Gastrocnemius medialis (tissue), 4 donors: ENCODE measurements at regions of chr12 and their contacts with region 1.

Region 1: GRCh38 chr12:70353780-70354660 is 12.1 kb upstream of the KCNMB4 start:
- DNase-seq: no peak
- ATAC-seq: no peak
- H3K4me3 ChIP-seq: no peak overlapping the region
- H3K27ac ChIP-seq: no peak overlapping the region
- H3K4me1 ChIP-seq: no peaks in the 10 kb centered on the region
- H3K27me3 ChIP-seq: no peaks in the 10 kb centered on the region
- CTCF ChIP-seq: no peak
- POLR2A ChIP-seq: no peak

Region 2: DNA sequence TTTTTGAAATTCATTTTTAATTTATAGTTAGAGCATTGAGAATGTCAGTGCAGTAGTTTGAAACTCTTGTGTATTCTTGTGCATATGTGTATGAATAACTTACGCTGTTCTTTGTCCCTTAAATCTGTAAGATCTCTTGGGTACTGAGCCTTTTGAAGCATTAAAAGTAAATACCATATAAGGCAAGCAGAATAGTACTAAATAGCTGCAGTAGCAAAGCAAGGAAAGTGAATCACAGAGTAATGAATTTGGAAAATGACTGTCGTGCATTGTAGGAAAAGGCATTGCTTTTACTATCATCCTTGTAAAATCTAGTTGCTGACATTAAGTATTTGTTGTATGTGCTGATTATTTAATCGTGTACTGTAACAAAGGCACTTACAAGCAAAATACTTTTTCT is 98.7 kb before region 1 on chr12:
- in situ Hi-C with region 1: loop called in 1 of 4 experiments (anchors 10 kb)
- intact Hi-C with region 1: no loop called
- DNase-seq: no peak
- ATAC-seq: no peak
- H3K4me3 ChIP-seq: no peak overlapping the region
- H3K27ac ChIP-seq: no peak overlapping the region
- H3K4me1 ChIP-seq: peaks cover 60 to 61% of the 10 kb centered on the region in 2 donors
- H3K27me3 ChIP-seq: no peaks in the 10 kb centered on the region
- CTCF ChIP-seq: no peak
- POLR2A ChIP-seq: no peak

Region 3: DNA sequence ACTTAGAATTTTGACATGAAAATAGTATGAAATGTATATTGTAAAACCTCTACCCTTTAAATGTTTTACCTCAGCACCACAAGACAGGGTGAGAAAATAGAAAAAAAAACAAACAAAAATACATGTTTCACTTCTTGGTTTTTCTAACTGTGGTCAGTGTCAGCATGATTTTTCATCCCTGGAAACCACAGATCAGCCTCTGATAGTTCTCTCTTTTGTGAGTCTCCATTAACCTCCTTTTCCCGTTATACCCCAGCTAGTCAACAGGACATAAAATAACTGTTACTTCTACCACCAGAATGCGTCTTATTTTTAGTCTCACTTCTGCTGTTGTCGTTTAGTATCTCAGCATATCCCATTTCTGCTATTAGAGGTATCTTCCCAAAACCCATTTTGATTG is 36.2 kb before region 1 on chr12:
- in situ Hi-C with region 1: no loop called
- intact Hi-C with region 1: loop called (anchors 5 kb)
- DNase-seq: no peak
- ATAC-seq: no peak
- H3K4me3 ChIP-seq: no peak overlapping the region
- H3K27ac ChIP-seq: no peak overlapping the region
- H3K4me1 ChIP-seq: peaks cover 0 to 9% of the 10 kb centered on the region in 2 donors
- H3K27me3 ChIP-seq: no peaks in the 10 kb centered on the region
- CTCF ChIP-seq: no peak
- POLR2A ChIP-seq: no peak

Region 4: DNA sequence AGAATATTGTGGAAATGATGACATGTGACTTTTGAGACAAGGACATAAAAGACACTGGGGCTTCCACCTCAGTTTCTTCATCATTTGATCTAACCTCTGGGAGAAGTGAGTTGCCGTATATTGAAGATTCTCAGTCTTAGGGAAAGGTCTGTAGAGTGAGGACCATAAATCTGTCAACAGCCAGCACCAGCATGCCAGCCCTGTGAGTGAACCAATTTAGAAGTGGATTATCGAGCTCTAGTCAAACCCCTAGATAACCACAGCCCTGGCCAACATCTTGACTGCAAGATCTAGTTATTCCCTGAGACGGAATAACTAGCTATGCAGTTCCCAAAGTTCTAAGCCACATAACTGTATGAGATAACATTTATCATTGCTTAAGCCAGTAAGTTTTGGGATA is 675.3 kb after region 1 on chr12:
- in situ Hi-C with region 1: no loop called
- intact Hi-C with region 1: no loop called
- DNase-seq: no peak
- ATAC-seq: no peak
- H3K4me3 ChIP-seq: no peak overlapping the region
- H3K27ac ChIP-seq: no peak overlapping the region
- H3K4me1 ChIP-seq: no peaks in the 10 kb centered on the region
- H3K27me3 ChIP-seq: no peaks in the 10 kb centered on the region
- CTCF ChIP-seq: no peak
- POLR2A ChIP-seq: no peak

Region 5: GRCh38 chr12:71216725-71217579 is 862.9 kb after region 1 on chr12:
- in situ Hi-C with region 1: no loop called
- intact Hi-C with region 1: no loop called
- DNase-seq: no peak
- ATAC-seq: no peak
- H3K4me3 ChIP-seq: no peak overlapping the region
- H3K27ac ChIP-seq: no peak overlapping the region
- H3K4me1 ChIP-seq: no peaks in the 10 kb centered on the region
- H3K27me3 ChIP-seq: no peaks in the 10 kb centered on the region
- CTCF ChIP-seq: peak in 3 of 5 experiments; percentile 25 to 40 (median 32)
- POLR2A ChIP-seq: no peak